OCI-LY7 (cell line): ENCODE measurements at regions of chr3 and their contacts with region 1.

Region 1: GRCh38 chr3:187066228-187066995 is 72.9 kb downstream of the RPL39L start:
- DNase-seq: peak; percentile 94
- H3K4me3 ChIP-seq: peak overlapping the region; percentile 63
- H3K27ac ChIP-seq: peak overlapping the region; percentile 99
- H3K4me1 ChIP-seq: peaks cover 97% of the 10 kb centered on the region
- CTCF ChIP-seq: peak; percentile 82

Region 2: DNA sequence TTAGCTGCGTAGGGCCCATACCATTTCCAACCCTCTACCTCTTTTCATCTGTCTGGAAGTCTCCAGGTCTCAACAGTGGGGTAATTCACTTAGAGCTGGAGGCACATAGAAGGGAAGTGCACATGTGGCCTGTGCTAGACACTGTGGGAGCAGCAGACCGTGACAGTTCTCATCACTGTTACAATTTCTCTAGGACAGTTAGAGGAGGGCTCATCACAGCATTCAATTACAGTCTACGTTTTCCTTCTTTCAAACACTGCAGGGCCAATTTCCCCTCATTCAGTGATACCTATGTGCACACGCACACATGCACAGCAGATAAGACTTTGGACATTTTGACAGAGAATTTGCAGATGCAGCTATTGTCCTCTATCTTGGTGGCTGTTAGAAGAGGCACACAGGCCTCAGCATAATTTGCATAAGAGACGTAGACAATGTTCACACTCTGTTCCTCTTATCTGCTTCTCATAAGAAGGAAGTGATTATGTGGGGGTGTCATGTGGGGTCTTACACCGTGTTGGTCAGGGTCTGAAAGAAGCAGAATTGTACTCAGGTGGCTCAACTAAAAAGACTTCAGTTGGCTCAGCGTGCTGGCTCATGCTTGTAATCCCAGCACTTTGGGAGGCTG is 413.2 kb before region 1 on chr3:
- CTCF ChIA-PET with region 1: no interaction called
- POLR2A ChIA-PET with region 1: no interaction called
- intact Hi-C with region 1: no loop called
- DNase-seq: peak; percentile 90
- H3K4me3 ChIP-seq: peak overlapping the region; percentile 36
- H3K27ac ChIP-seq: peak overlapping the region; percentile 87
- H3K4me1 ChIP-seq: peaks cover 42% of the 10 kb centered on the region
- CTCF ChIP-seq: no peak

Region 3: GRCh38 chr3:186831798-186832197 is 234.6 kb before region 1 on chr3:
- CTCF ChIA-PET with region 1: no interaction called
- POLR2A ChIA-PET with region 1: no interaction called
- intact Hi-C with region 1: no loop called
- DNase-seq: no peak
- H3K4me3 ChIP-seq: no peak overlapping the region
- H3K27ac ChIP-seq: no peak overlapping the region
- H3K4me1 ChIP-seq: peaks cover 6% of the 10 kb centered on the region
- CTCF ChIP-seq: no peak

Region 4: DNA sequence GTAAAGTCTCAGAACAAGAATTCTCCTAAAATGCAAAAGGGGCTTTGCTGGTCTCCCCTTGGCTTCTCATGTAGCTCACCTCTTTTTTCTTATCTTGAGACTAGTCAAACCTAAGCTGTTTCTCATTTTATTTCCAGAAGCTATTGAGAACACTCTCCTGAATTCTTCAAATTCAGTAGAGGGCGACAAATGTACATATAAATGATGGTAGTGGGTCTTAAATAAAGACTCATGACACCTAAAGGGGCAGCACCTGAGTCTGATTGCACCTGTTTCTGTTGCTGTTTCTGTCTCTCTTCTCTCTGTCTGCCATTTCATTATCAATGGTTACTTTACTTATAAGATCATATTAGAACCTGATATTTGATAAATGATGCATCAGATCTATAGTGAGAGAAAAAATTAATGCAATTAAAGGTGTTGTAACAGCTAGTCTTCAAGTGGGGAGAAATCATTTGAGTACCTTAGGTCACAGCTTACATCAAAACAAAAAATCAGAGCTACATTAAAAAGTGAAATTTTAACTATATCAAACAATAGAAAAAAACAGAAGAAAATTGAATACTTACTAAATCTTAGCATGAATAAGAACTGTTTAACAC is 216.9 kb before region 1 on chr3:
- CTCF ChIA-PET with region 1: no interaction called
- POLR2A ChIA-PET with region 1: interaction called, 4 read pairs
- intact Hi-C with region 1: loop called (anchors 1 kb)
- DNase-seq: peak; percentile 85
- H3K4me3 ChIP-seq: no peak overlapping the region
- H3K27ac ChIP-seq: no peak overlapping the region
- H3K4me1 ChIP-seq: peaks cover 16% of the 10 kb centered on the region
- CTCF ChIP-seq: peak; percentile 91

Region 5: GRCh38 chr3:186946756-186947375 is 119.5 kb before region 1 on chr3:
- CTCF ChIA-PET with region 1: no interaction called
- POLR2A ChIA-PET with region 1: interaction called, 12 read pairs
- intact Hi-C with region 1: loop called (anchors 5 kb)
- DNase-seq: peak; percentile 84
- H3K4me3 ChIP-seq: peak overlapping the region; percentile 44
- H3K27ac ChIP-seq: peak overlapping the region; percentile 82
- H3K4me1 ChIP-seq: peaks cover 60% of the 10 kb centered on the region
- CTCF ChIP-seq: no peak

Region 6: DNA sequence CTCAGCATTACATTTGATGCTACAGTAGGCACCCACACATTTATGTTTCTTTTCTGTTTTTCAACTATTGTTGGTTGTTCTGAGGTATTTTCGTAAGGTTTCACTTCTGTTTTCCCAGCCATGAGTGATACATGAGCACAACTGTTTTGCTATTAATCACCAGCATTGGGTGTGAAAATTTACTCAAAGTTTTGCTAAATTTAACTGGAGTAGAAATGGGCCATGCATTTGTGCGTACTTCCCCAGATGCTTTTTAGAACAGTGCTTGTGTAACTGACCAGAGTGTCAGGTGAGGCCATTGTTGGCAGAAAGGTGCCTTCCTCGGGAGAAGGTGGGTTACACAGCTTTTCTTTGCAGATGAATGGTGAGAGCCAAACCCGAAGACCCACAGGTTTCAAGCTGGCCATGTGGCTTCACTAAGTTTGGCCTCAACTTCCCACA is 65.7 kb before region 1 on chr3:
- CTCF ChIA-PET with region 1: interaction called, 3 read pairs
- POLR2A ChIA-PET with region 1: interaction called, 60 read pairs
- intact Hi-C with region 1: loop called (anchors 1 kb)
- DNase-seq: peak; percentile 92
- H3K4me3 ChIP-seq: peak overlapping the region; percentile 77
- H3K27ac ChIP-seq: peak overlapping the region; percentile 98
- H3K4me1 ChIP-seq: peaks cover 72% of the 10 kb centered on the region
- CTCF ChIP-seq: no peak

Region 7: GRCh38 chr3:187025656-187026316 is 40.6 kb before region 1 on chr3:
- CTCF ChIA-PET with region 1: interaction called, 3 read pairs
- POLR2A ChIA-PET with region 1: interaction called, 122 read pairs
- intact Hi-C with region 1: loop called (anchors 1 kb)
- DNase-seq: peak; percentile 89
- H3K4me3 ChIP-seq: peak overlapping the region; percentile 94
- H3K27ac ChIP-seq: peak overlapping the region; percentile 98
- H3K4me1 ChIP-seq: peaks cover 72% of the 10 kb centered on the region
- CTCF ChIP-seq: no peak

Region 8: DNA sequence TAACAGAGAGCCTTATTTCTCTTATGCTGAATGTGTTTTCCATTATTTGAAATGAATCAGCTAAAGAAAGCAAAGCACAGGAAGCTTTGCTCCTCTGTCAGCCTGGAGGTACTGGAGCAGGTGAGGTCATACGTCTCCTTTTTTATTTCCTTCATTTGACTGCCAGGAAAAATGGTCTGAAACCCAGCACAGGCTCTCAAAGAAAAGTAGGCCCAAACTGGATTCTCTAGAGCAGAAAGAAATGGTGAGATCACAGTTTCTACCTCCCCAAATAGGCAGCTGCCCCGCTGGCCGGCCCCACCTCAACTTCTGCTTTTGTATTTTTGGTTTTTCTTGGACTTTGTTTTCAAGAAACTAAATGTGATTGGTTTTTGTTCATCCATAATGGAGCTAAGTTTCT is 22.2 kb before region 1 on chr3:
- CTCF ChIA-PET with region 1: interaction called, 3 read pairs
- POLR2A ChIA-PET with region 1: interaction called, 15 read pairs
- intact Hi-C with region 1: loop called (anchors 1 kb)
- DNase-seq: peak; percentile 84
- H3K4me3 ChIP-seq: peak overlapping the region; percentile 56
- H3K27ac ChIP-seq: peak overlapping the region; percentile 90
- H3K4me1 ChIP-seq: peaks cover 72% of the 10 kb centered on the region
- CTCF ChIP-seq: no peak